ENCODE measurements at regions of chr14 and their contacts with region 1.

Region 1: DNA sequence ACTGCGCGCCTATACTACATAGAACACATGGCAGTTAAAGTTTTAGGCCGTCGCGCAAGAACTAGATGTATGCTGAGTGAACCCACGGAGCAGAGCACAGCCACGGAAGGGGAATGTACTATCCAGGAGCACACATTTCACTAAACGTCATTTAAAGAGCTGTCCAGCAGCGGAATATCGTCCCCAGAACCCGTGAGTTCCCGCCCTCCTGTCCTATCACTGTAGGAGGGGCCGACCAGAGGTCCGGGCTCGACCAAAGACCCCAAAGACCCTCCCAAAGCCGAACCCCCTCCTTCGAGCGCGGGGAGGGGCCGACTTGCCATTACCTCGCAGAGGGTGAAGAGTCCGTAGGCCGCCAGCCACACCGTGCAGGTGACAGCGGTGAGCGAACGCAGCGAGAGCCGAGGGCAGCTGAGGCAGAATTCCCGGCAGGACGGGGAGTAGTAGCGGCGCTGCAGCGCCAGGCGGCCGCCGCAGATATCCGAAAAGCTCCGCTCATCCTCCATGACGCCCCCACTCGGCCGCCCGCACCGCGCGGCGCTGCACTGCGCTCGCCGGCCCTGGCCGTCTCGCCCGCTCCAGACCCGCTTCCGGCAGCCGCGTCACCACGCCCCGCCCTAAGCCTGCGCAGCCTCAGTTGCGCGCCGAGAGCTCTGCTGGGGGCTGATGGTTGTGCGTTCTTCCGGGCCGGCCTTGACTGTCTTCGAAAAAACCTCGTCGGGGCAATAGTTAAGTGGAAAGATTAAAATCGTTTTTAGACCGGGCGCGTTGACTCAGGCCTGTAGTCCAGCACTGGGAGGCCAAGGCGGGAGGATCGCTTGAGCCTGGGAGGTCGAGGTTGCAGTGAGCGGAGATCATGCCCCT is at the start of gene PIGH:
- DNase-seq: peak; percentile 95
- ATAC-seq: peak; percentile 100
- H3K4me3 Mint-ChIP-seq: peak within 1 kb of the TSS; percentile 89
- H3K27ac Mint-ChIP-seq: peak within 1 kb of the TSS; percentile 94
- H3K4me1 Mint-ChIP-seq: peaks cover 41% of the 10 kb centered on the region
- H3K27me3 Mint-ChIP-seq: no peaks in the 10 kb centered on the region
- CTCF ChIP-seq: peak; percentile 44
- total RNA-seq, gene PIGH: 20.3 to 21.9 TPM

Region 2: GRCh38 chr14:67583711-67584644 is 16.0 kb before region 1 on chr14:
- CTCF ChIA-PET with region 1: interaction called, 15 read pairs
- POLR2A ChIA-PET with region 1: interaction called, 7 read pairs
- intact Hi-C with region 1: no loop called
- DNase-seq: peak; percentile 39
- ATAC-seq: peak; percentile 80
- H3K4me3 Mint-ChIP-seq: no peak overlapping the region
- H3K27ac Mint-ChIP-seq: no peak overlapping the region
- H3K4me1 Mint-ChIP-seq: no peaks in the 10 kb centered on the region
- H3K27me3 Mint-ChIP-seq: no peaks in the 10 kb centered on the region
- CTCF ChIP-seq: peak; percentile 51

Region 3: DNA sequence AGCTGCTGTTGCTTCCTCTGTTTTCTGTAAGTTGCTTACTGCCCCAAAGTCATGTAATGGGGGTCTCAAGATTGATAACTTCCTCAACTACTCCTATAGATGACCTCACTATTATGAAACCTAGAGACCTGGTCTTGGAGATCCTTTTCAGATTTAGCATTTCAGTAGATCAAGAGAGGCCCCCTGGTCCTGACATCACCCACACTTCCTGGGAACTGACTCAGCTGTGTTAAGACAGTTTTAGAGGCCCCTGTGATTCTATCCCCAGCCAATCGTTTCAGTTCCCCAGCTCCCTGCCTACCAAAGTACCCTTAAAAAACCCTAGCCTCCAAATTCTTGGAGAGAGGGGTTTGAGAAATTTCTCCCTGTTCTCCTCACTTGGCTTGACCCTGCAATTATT is 10.6 kb after region 1 on chr14:
- CTCF ChIA-PET with region 1: interaction called, 10 read pairs
- POLR2A ChIA-PET with region 1: interaction called, 3 read pairs
- intact Hi-C with region 1: no loop called
- DNase-seq: peak; percentile 54
- ATAC-seq: peak; percentile 98
- H3K4me3 Mint-ChIP-seq: no peak overlapping the region
- H3K27ac Mint-ChIP-seq: no peak overlapping the region
- H3K4me1 Mint-ChIP-seq: peaks cover 9% of the 10 kb centered on the region
- H3K27me3 Mint-ChIP-seq: peaks cover 3% of the 10 kb centered on the region
- CTCF ChIP-seq: no peak

Region 4: DNA sequence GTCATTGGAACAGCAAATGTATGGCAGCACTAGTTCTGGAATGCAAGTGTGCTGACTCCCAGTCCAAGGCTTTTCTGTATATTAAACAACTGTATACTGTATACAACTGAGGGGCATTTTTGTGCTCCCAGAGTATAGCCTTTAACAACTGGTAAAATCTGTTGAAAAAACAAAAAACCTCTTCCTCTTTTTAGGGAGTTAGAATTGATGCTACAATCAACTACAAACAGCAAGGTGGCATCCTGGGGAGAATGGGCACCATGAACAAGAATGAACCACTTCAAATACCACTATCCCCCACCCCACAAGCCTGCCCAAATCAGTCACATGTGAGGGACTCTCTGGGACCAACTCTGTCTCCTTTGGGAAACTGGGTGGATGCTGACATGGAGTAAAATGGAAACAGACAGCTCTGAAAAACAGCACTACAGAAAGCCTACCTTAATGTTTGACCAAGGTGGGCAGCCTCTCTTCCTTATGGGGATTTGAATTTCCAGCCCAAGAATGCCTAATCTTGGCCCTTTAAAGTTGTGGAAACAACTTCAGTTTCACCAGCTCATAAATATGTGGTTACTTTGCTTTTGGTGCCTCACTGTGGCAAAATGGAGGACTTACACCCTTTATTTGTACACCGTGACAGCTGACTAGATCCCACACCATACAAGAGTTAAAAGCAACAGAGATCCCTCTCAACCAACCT is 67.0 kb after region 1 on chr14:
- CTCF ChIA-PET with region 1: interaction called, 8 read pairs
- POLR2A ChIA-PET with region 1: no interaction called
- intact Hi-C with region 1: loop called (anchors 5 kb)
- DNase-seq: peak; percentile 44
- ATAC-seq: peak; percentile 87
- H3K4me3 Mint-ChIP-seq: no peak overlapping the region
- H3K27ac Mint-ChIP-seq: peak overlapping the region; percentile 61
- H3K4me1 Mint-ChIP-seq: peaks cover 53% of the 10 kb centered on the region
- H3K27me3 Mint-ChIP-seq: no peaks in the 10 kb centered on the region
- CTCF ChIP-seq: peak; percentile 47